Stomach (tissue), 19 donors: ENCODE measurements at regions of chr10 and their contacts with region 1.

Region 1: GRCh38 chr10:102835007-102835482 is 2.2 kb downstream of the CYP17A1 start:
- DNase-seq: peak; percentile 82 to 92
- H3K4me3 ChIP-seq: no peak overlapping the region
- H3K27ac ChIP-seq: no peak overlapping the region
- H3K4me1 ChIP-seq: peaks cover 0 to 13% (median 6%) of the 10 kb centered on the region in 4 donors
- H3K27me3 ChIP-seq: no peaks in the 10 kb centered on the region
- CTCF ChIP-seq: peak in 5 of 7 experiments; percentile 74 to 89 (median 78)
- EP300 ChIP-seq: no peak
- POLR2A ChIP-seq: no peak

Region 2: DNA sequence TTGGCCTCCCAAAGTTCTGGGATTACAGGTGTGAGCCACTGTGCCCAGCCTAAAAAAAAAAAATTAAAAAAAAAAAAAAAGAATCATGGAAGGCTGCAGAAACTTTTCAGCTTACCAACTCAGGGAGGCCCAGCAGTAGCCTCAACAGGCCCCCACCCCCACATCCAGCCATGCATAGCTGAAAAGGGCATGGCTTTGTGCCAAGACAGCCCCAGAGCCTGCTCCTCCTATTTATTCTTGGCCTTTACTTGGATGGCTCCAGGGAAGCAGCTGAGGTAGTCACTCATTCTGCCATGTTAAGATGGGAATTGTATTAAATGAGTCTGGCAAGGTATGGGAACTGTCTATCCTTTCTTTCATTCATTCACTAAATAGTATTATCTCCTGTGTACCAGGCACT is 69.3 kb after region 1 on chr10:
- intact Hi-C with region 1: loop called (anchors 5 kb)
- DNase-seq: no peak
- H3K4me3 ChIP-seq: no peak overlapping the region
- H3K27ac ChIP-seq: no peak overlapping the region
- H3K4me1 ChIP-seq: no peaks in the 10 kb centered on the region
- H3K27me3 ChIP-seq: no peaks in the 10 kb centered on the region
- CTCF ChIP-seq: no peak
- EP300 ChIP-seq: no peak
- POLR2A ChIP-seq: no peak